Posterior cingulate gyrus (tissue), 11 donors: ENCODE measurements at regions of chr2 and their contacts with region 1.

Region 1: GRCh38 chr2:61910603-61911002 is 5.1 kb downstream of the COMMD1 start:
- DNase-seq: no peak

Region 2: GRCh38 chr2:61993444-61994024 is 82.9 kb after region 1 on chr2:
- intact Hi-C with region 1: loop called (anchors 5 kb)
- DNase-seq: peak in 2 of 10 donors; percentile 11 to 59